PC-9 (cell line): ENCODE measurements at regions of chr1 and their contacts with region 1.

Region 1: DNA sequence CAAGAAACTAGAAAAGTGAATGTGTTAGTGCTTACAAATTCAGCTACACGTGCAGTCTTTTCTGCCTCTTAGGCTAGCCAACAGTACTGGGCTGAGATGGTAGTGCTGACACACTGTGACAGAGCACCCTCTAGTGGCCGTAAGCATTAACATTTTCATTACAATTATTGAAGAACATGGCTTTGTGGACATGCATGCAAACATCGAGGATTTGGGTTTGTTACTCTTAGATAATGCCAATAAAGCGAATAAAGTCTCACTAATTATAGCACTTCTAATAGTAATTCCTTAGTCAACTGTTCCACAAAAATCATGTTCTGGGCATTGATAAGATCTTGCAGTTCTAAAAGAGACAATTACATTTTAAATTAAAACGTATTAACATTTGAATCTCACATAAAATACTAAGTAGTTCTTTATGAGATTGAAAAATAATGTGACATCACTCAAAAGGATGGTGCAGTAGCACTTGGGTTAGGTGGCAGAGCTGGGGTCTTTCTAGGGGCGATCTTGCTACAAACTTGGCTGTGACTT is 47.1 kb downstream of the MYSM1 start:
- DNase-seq: peak; percentile 62 to 76
- H3K4me3 ChIP-seq: no peak overlapping the region
- H3K27ac ChIP-seq: peak overlapping the region; percentile 24
- H3K4me1 ChIP-seq: 0 out of 2 replicates have a peak, but pooled peaks cover 5% of the 10 kb centered on the region
- H3K27me3 ChIP-seq: no peaks in the 10 kb centered on the region
- CTCF ChIP-seq: peak; percentile 93

Region 2: GRCh38 chr1:58515794-58516401 is 136.8 kb before region 1 on chr1:
- CTCF ChIA-PET with region 1: interaction called, 3 read pairs
- POLR2A ChIA-PET with region 1: no interaction called
- intact Hi-C with region 1: loop called (anchors 1 kb)
- DNase-seq: peak; percentile 25 to 61
- H3K4me3 ChIP-seq: no peak overlapping the region
- H3K27ac ChIP-seq: no peak overlapping the region
- H3K4me1 ChIP-seq: no peaks in the 10 kb centered on the region
- H3K27me3 ChIP-seq: no peaks in the 10 kb centered on the region
- CTCF ChIP-seq: peak; percentile 86

Region 3: GRCh38 chr1:58546520-58547308 is 106.0 kb before region 1 on chr1 and contains the start of gene OMA1:
- CTCF ChIA-PET with region 1: interaction called, 5 read pairs
- POLR2A ChIA-PET with region 1: no interaction called
- intact Hi-C with region 1: loop called (anchors 1 kb)
- DNase-seq: peak; percentile 85 to 98
- H3K4me3 ChIP-seq: peak within 1 kb of the TSS; percentile 85
- H3K27ac ChIP-seq: peak within 1 kb of the TSS; percentile 79
- H3K4me1 ChIP-seq: peaks cover 11% of the 10 kb centered on the region
- H3K27me3 ChIP-seq: no peaks in the 10 kb centered on the region
- CTCF ChIP-seq: peak; percentile 90
- total RNA-seq, gene OMA1: 27.9 and 29.0 TPM in 2 replicates

Region 4: DNA sequence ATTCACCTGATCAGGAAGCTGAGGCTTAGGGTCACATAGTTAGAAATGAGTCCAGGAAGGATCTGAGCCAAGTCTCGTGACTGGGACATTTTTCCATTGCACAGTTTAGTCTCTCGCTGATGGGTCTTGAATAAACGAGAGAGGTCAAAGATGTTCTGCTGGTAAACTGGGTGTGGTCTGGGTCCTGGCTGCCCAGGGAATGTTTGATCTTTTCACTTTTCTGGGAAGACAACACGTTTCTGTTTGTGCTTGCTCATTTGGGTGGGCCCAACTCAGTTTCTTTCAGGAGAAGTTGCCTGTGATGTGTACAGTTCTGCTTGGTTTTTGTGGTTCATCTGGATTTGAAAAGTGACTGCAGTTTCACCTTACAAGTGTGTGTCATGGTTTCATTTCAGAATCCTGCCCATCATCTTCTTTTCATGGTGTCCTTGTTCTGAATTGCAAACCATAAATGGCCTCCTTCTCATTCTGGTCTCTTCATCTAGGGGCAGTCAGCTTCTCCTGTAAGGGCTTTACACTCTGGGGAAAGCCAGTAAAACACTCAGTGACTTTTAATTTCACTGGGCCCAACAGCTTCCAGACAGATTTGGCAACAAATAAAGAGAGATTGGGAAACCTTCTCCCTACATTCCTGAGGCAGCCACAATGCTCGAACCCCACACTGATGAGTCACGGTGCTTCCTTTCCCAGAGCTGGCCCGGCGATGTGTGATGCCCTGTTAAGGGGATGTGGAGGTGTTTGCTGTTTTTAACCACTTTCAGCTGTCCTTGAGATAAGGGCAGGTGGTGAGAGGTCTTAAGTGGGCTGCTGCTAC is 68.4 kb before region 1 on chr1:
- CTCF ChIA-PET with region 1: interaction called, 3 read pairs
- POLR2A ChIA-PET with region 1: no interaction called
- intact Hi-C with region 1: loop called (anchors 1 kb)
- DNase-seq: peak; percentile 90 to 96
- H3K4me3 ChIP-seq: peak overlapping the region; percentile 36; the same call in 1 of the 2 replicates
- H3K27ac ChIP-seq: peak overlapping the region; percentile 99
- H3K4me1 ChIP-seq: peaks cover 45% of the 10 kb centered on the region
- H3K27me3 ChIP-seq: no peaks in the 10 kb centered on the region
- CTCF ChIP-seq: no peak

Region 5: GRCh38 chr1:58592529-58593134 is 60.1 kb before region 1 on chr1:
- CTCF ChIA-PET with region 1: no interaction called
- POLR2A ChIA-PET with region 1: no interaction called
- intact Hi-C with region 1: loop called (anchors 1 kb)
- DNase-seq: peak; percentile 87 to 94
- H3K4me3 ChIP-seq: no peak overlapping the region
- H3K27ac ChIP-seq: peak overlapping the region; percentile 81
- H3K4me1 ChIP-seq: peaks cover 31% of the 10 kb centered on the region
- H3K27me3 ChIP-seq: no peaks in the 10 kb centered on the region
- CTCF ChIP-seq: no peak

Region 6: GRCh38 chr1:58699011-58699762 is 46.5 kb after region 1 on chr1:
- CTCF ChIA-PET with region 1: no interaction called
- POLR2A ChIA-PET with region 1: no interaction called
- intact Hi-C with region 1: no loop called
- DNase-seq: no peak
- H3K4me3 ChIP-seq: peak overlapping the region; percentile 88
- H3K27ac ChIP-seq: peak overlapping the region; percentile 44
- H3K4me1 ChIP-seq: peaks cover 7% of the 10 kb centered on the region; the same call in 1 of the 2 replicates
- H3K27me3 ChIP-seq: no peaks in the 10 kb centered on the region
- CTCF ChIP-seq: no peak